Heart right ventricle (tissue), 16 donors: ENCODE measurements at regions of chr6 and their contacts with region 1.

Region 1: GRCh38 chr6:107532706-107533105 is 42.8 kb downstream of the SOBP start:
- DNase-seq: peak; percentile 22 to 31
- ATAC-seq: peak in 7 of 8 donors; percentile 60 to 73 (median 70)
- H3K4me3 ChIP-seq: no peak overlapping the region
- H3K27ac ChIP-seq: peak overlapping the region in 4 of 10 donors; percentile 6 to 55 (median 34)
- H3K4me1 ChIP-seq: peaks cover 0 to 62% (median 15%) of the 10 kb centered on the region in 9 donors
- H3K27me3 ChIP-seq: no peaks in the 10 kb centered on the region
- CTCF ChIP-seq: no peak

Region 2: DNA sequence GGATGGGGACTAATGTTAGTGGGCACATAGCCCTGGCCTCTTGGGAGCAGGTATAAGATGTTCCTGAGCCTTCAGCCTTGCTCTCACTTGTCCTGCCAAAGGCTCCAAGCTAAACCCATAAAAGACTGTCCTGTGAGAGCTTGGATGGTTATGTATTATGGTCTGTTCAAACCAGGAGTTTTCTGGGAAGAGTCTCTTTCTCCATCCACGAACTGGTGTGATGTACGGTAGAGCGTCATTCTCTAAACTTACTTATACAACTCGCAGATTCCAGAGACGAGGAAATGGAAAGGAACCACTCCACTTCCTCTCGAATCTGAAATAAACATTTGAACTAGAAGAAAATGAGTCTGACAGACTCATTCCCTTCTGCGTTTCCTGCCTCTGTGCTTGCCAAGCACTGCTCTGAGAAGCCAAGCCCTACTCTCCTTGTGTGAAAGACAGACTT is 37.5 kb before region 1 on chr6:
- intact Hi-C with region 1: loop called in 3 of 10 experiments (anchors 5 kb)
- DNase-seq: peak in 1 of 2 donors; percentile 39
- ATAC-seq: peak in 5 of 8 donors; percentile 9 to 45 (median 24)
- H3K4me3 ChIP-seq: peak overlapping the region in 6 of 10 donors; percentile 15 to 29 (median 20)
- H3K27ac ChIP-seq: peak overlapping the region; percentile 74 to 92 (median 88)
- H3K4me1 ChIP-seq: peaks cover 5 to 89% (median 69%) of the 10 kb centered on the region in 9 donors
- H3K27me3 ChIP-seq: peaks cover 0 to 33% (median 0%) of the 10 kb centered on the region in 7 donors
- CTCF ChIP-seq: no peak

Region 3: GRCh38 chr6:107509506-107509905 is 23.2 kb before region 1 on chr6:
- intact Hi-C with region 1: loop called in 1 of 10 experiments (anchors 2 kb)
- DNase-seq: no peak
- ATAC-seq: no peak
- H3K4me3 ChIP-seq: no peak overlapping the region
- H3K27ac ChIP-seq: peak overlapping the region in 1 of 10 donors; percentile 47
- H3K4me1 ChIP-seq: peaks cover 7 to 46% (median 19%) of the 10 kb centered on the region in 9 donors
- H3K27me3 ChIP-seq: no peaks in the 10 kb centered on the region
- CTCF ChIP-seq: no peak

Region 4: DNA sequence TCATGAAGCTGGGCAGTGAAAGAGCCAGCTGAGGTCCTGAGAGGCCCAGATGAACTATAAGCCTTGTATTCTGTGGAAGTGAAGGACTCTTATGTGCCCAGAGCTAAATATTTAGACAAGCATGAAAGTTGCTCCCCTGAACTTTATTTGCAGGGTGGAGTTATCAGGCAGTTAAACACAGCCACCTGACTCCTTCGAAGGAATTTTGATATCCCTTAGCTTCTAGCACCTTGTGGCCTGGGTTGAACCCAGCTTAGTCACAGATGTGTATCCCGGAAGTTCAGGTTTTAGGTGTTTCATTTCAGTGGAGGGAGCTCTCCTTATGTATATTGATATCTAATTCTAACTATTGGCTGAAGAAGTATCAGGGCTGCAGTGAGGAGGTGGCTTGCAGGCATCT is 653.5 kb after region 1 on chr6:
- intact Hi-C with region 1: no loop called
- DNase-seq: no peak
- ATAC-seq: no peak
- H3K4me3 ChIP-seq: no peak overlapping the region
- H3K27ac ChIP-seq: no peak overlapping the region
- H3K4me1 ChIP-seq: no peaks in the 10 kb centered on the region
- H3K27me3 ChIP-seq: peaks cover 0 to 73% (median 26%) of the 10 kb centered on the region in 7 donors
- CTCF ChIP-seq: no peak